Breast epithelium (tissue), 4 donors: ENCODE measurements at regions of chr14 and their contacts with region 1.

Region 1: GRCh38 chr14:94867946-94868771 is 98.2 kb upstream of the GSC start:
- DNase-seq: no peak
- H3K4me3 ChIP-seq: no peak overlapping the region
- H3K27ac ChIP-seq: no peak overlapping the region
- H3K4me1 ChIP-seq: no peaks in the 10 kb centered on the region
- H3K27me3 ChIP-seq: no peaks in the 10 kb centered on the region
- CTCF ChIP-seq: no peak
- POLR2A ChIP-seq: no peak

Region 2: DNA sequence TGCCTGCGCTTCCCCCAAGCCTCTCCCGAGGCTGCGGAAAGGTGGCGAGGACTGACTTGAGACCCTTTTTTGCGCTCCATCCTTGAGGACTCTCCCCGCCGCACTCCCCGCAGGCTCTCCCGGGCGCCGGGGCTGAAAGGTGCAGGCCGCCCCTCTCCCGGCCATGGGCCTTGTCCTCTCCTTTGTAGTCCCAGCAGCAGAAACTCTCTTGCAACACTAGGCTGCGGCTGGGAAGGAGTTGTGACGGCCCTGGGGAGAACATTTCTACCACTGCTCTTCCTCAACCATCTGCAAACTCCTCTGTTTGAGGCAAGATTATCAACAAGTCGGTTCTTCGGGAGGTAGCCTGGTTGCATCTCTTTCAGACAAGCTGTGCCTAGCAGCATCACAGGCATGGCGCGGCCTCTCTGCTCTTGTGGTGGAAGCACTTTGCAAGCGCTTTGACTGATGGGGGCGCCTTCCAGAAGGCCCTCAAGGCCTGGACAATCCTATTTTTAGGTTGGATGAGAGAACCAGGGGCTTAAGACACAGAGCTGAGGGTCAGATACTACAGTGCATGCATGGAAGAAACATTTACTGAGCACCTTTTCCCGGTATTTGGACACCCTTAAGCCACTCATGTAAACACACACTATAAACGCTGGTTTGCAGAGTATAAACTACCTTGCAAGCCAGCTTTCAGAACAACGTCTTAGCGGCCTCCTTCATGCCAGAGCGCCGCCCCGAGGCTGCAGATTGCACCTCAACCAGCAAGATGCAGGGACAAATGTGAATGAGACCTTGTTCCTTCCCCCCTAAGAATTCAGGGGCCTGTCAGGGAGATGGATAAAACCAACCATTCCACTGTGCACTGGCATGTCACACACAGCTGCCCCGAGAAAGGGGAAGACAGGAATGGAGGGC is 1078.7 kb before region 1 on chr14:
- intact Hi-C with region 1: loop called (anchors 5 kb)
- DNase-seq: no peak
- H3K4me3 ChIP-seq: peak overlapping the region; percentile 53 to 80 (median 63)
- H3K27ac ChIP-seq: peak overlapping the region; percentile 84 to 90
- H3K4me1 ChIP-seq: peaks cover 6 to 10% of the 10 kb centered on the region in 2 donors
- H3K27me3 ChIP-seq: no peaks in the 10 kb centered on the region
- CTCF ChIP-seq: peak in 1 of 3 donors; percentile 14
- POLR2A ChIP-seq: no peak

Region 3: DNA sequence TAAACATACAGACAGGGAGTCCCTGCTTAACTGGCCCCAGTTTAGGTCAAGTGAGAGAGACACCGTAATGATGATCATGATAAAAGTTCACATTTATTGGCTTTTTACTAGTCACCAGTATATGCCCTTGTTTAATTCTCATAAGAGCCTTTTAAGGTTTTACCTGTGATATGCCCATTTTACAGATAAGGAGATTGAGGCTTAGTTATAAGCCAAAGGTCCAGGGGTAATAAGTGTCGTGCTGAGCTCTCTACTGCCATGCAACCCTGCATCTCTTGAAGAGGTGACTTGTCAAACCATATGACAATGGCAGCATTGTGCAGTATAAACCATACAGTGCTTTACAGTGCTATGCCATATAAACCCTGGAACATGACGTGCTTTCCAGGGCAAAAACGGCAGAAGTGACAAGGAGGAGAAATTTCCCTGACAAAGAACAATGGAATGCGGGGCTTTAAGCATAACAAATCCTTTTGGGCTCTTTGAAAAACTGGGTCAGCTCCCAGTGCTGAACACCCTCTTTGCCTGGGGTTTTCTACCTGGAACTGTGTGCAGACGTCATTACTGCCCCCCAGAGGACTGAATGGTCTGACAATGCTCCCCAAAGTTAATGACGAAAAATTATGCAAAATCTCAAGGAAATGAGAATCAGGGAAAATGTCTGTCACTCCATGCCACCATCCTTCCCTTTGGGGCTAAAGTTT is 1111.3 kb after region 1 on chr14:
- intact Hi-C with region 1: no loop called
- DNase-seq: no peak
- H3K4me3 ChIP-seq: no peak overlapping the region
- H3K27ac ChIP-seq: no peak overlapping the region
- H3K4me1 ChIP-seq: no peaks in the 10 kb centered on the region
- H3K27me3 ChIP-seq: peaks cover 0 to 34% of the 10 kb centered on the region in 2 donors
- CTCF ChIP-seq: no peak
- POLR2A ChIP-seq: no peak